ENCODE measurements at regions of chr1 and their contacts with region 1.

Region 1: DNA sequence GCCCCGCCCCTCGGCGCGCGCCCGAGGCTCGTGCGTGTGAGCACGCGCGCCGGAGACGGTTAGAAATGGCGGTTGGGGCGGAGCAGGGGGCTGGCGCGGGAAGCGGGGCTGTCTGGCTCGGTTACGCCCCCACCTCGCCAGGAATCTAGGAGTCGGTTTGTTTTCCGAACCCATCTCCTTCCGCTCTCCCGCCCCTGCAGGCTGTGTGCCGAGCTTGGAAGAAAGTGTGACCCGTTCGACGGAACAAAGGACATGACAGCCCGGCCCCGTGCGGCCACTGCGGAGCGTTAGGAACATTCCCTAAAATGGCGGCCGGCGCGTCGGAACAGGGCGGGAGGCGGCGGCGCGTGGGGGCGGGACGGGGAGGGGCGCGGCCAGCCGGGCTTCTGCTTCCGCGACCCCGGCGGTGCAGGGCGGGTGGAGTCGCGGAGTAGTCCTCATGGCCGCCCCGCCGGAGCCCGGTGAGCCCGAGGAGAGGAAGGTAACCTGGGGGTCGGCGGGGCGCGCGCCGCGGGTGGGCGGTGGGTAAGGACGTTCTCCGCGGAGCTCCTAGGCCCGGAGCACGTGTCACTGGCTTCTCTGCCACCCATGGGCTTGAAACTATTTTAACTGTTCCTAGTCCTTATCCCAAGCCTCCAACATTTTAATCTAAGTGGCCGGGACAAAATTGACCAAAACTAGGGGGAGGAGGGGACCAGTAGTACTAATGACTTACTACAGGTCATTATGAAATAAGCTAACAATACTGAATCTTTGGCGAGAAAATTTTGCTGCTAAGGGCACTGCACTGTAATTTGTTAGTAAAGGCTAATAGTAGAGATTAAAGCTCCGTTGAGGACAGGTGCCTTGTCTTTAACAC is at the start of gene COX20:
- DNase-seq: peak in 1 of 2 donors; percentile 94
- H3K4me3 ChIP-seq: peak within 1 kb of the TSS; percentile 85
- H3K27ac ChIP-seq: peak within 1 kb of the TSS; percentile 99
- H3K4me1 ChIP-seq: peaks cover 41% of the 10 kb centered on the region
- H3K27me3 ChIP-seq: no peaks in the 10 kb centered on the region
- CTCF ChIP-seq: no peak
- POLR2A ChIP-seq: peak in 1 of 2 donors; percentile 16
- total RNA-seq, gene COX20: 24.1 TPM

Region 2: GRCh38 chr1:243264717-243265116 is 1570.8 kb before region 1 on chr1:
- intact Hi-C with region 1: loop called (anchors 10 kb)
- DNase-seq: no peak
- H3K4me3 ChIP-seq: no peak overlapping the region
- H3K27ac ChIP-seq: no peak overlapping the region
- H3K4me1 ChIP-seq: peaks cover 25% of the 10 kb centered on the region
- H3K27me3 ChIP-seq: no peaks in the 10 kb centered on the region
- CTCF ChIP-seq: no peak
- POLR2A ChIP-seq: no peak

Region 3: GRCh38 chr1:244864253-244865027 is 28.9 kb after region 1 on chr1 and contains the start of gene HNRNPU:
- intact Hi-C with region 1: loop called (anchors 1 kb)
- DNase-seq: peak in 1 of 2 donors; percentile 97
- H3K4me3 ChIP-seq: peak within 1 kb of the TSS; percentile 97 to 100
- H3K27ac ChIP-seq: peak within 1 kb of the TSS; percentile 100
- H3K4me1 ChIP-seq: peaks cover 31% of the 10 kb centered on the region
- H3K27me3 ChIP-seq: no peaks in the 10 kb centered on the region
- CTCF ChIP-seq: peak in 1 of 3 experiments; percentile 44
- POLR2A ChIP-seq: peak; percentile 81 to 99
- total RNA-seq, gene HNRNPU: 293 TPM

Region 4: DNA sequence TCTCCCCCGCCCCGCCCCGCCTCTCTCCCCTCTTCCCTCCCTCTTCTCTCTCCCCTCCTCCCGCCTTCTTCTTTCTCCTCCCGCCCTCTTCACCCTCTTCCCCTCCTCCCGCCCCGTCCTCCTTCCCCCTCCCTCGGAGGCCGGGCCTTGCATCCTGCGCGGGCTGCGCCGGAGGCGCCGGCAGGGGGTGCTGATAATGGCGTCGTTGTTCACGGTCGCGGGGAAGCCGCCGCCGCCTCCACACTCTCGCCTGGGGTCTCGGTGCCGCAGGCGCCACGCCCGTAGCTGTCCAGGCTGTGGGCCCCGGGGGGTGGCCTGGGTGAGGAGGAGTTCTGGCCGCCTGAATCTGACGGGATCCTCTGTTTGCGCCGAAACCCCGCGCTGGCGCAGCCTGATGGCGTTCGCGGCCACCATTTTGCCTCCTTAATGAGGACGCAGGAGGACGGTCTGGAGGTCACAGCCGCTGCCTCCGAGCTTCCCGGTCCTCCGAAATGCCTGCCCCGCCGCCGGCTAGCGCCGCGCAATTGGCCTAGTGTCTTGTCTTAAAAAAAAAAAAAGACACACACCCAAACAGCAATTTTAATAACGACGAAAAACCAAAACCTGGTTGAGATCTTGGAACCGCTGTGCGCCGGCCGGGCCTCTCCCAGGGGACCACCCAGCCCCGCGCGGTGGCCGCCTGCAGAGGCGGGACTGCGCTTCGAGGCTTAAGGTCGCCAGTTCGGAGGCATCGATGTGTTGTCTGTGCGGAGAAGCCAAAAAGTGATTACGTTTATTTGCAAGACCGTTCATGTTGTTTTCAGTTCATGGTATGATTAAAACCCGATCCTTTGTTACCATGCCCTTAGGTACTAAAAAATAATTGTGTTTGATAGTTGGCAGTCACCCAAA is 135.4 kb after region 1 on chr1:
- intact Hi-C with region 1: loop called (anchors 10 kb)
- DNase-seq: peak in 1 of 2 donors; percentile 96
- H3K4me3 ChIP-seq: peak overlapping the region; percentile 81 to 83
- H3K27ac ChIP-seq: peak overlapping the region; percentile 99
- H3K4me1 ChIP-seq: peaks cover 22% of the 10 kb centered on the region
- H3K27me3 ChIP-seq: no peaks in the 10 kb centered on the region
- CTCF ChIP-seq: peak in 2 of 3 experiments; percentile 57 to 59
- POLR2A ChIP-seq: peak in 1 of 2 donors; percentile 73